Dendritic cell treated with granulocyte-macrophage colony-stimulating factor and Interleukin-4, amounts not matched to agents 40 ng/mL and 50 ng/mL, for 4 days (primary cell): ENCODE measurements at regions of chr19 and their contacts with region 1.

Region 1: DNA sequence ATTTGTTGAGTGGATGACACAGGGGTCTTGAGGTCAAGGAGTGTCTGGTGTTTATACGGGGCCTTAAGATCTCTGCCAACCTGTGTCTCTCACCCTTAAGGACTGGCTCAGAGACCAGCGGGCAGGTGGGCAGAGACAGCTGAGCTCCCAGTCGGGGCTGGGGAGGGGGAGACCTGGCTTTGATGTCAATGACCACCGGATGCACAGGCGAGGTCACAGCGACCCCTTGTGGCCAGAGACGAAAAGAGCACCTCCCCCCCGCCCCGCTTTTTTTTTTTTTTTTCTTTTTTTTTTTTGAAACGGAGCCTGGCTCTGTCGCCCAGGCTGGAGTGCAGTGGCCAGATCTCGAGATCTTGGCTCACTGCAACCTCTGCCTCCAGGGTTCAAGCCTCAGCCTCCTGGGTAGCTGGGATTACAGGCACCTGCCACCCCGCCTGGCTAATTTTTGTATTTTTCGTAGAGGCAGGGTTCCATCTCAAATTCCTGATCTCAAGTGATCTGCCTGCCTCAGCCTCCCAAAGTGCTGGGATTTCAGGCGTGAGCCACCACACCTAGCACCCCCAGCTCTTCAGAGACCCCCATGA is 12.1 kb upstream of the KLK14 start:
- H3K4me3 Mint-ChIP-seq: no peak overlapping the region
- H3K27ac Mint-ChIP-seq: no peak overlapping the region
- H3K4me1 Mint-ChIP-seq: peaks cover 29% of the 10 kb centered on the region
- H3K27me3 Mint-ChIP-seq: peaks cover 6% of the 10 kb centered on the region

Region 2: DNA sequence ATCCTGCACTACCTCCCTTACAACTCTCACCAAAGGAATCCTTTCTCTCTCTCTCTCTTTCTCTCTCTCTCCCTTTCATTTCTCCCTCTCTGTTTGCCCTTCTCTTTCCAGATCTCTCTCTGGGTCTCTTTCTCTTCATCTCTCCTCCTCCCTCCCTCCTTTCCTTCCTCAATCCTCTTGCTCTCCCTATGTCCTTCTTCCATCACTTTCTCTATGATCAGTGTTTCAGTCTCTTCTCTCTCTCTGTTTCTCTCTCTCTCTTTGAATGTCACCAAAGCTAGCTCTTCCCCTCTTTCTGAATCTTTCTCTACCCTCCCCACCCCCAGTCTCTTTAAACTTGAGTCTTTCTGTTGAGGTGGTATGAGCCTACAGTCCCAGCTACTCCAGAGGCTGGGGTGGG is 163.8 kb before region 1 on chr19:
- intact Hi-C with region 1: loop called (anchors 2 kb)
- H3K4me3 Mint-ChIP-seq: no peak overlapping the region
- H3K27ac Mint-ChIP-seq: no peak overlapping the region
- H3K4me1 Mint-ChIP-seq: no peaks in the 10 kb centered on the region
- H3K27me3 Mint-ChIP-seq: peaks cover 31% of the 10 kb centered on the region

Region 3: DNA sequence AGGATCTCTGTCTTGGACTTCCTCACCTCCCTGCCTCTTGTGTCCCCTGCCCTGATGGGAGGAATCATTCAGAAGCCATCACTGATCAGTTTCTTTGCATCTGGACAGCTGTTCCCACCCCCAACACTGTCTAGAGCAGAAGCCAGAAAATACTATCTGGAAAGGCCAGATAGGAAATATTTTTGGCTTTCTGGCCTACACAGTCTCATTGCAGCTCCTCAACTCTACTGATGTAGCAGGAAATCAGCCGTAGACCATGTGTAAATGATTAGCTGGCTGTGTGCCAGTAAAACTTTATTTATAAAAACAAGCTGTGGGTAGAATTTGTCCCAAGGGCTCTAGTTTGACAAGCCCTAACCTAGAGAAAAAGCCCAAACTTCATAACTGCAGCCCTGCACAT is 52.9 kb after region 1 on chr19:
- intact Hi-C with region 1: no loop called
- H3K4me3 Mint-ChIP-seq: no peak overlapping the region
- H3K27ac Mint-ChIP-seq: peak overlapping the region; percentile 79
- H3K4me1 Mint-ChIP-seq: peaks cover 96% of the 10 kb centered on the region
- H3K27me3 Mint-ChIP-seq: no peaks in the 10 kb centered on the region